ENCODE measurements at regions of chr17 and their contacts with region 1.

Region 1: DNA sequence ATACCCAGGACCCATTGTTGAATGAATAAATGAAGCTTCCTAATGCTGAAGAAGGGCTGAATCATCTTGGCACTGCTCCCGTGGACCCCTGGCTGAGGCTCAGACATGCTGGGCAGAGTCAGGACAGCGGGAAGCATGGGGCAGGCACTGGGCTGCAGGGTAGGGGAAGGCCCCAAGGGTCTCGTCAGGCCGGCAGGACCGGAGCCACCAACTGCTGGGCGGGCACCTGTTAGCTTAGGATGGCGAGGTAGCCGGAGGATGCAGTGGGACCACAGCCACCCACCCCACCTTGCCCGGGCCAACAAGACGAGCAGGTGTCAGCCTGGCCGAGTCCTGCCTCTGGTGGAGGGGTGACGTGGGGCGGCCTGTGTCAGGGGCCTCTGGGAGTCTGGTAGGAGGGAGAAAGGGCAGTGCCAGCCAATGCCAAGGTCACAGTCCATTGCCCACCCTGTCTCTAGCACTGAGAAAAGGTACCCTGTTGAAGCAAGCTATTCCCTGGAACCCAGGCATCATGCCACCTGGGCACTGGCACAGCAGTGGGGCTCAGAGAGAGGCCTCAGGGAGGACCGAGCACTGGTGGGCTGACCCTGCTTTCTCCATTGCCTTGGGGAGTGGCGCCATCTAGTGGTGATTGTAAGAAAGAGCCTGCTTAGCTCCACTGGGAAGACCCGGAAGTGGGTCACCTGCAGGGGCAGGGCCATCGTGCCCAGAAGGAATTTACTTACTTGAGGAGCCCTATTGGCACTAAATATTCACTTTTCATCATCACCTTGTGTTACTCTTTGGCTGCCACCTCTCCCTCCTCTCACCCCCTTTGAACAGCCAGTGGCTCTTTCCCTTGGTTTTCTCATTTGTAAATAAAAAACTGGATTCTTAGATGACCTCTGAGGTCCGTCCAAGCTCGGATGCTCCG is 3.0 kb upstream of the DLX3 start:
- DNase-seq: peak; percentile 10
- H3K4me3 ChIP-seq: no peak overlapping the region
- CTCF ChIP-seq: peak; percentile 85

Region 2: GRCh38 chr17:49567871-49568694 is 430.0 kb before region 1 on chr17:
- CTCF ChIA-PET with region 1: interaction called, 105 read pairs
- POLR2A ChIA-PET with region 1: no interaction called
- DNase-seq: no peak
- H3K4me3 ChIP-seq: peak overlapping the region; percentile 54
- CTCF ChIP-seq: peak; percentile 96

Region 3: GRCh38 chr17:49836111-49837030 is 161.7 kb before region 1 on chr17:
- CTCF ChIA-PET with region 1: interaction called, 37 read pairs
- POLR2A ChIA-PET with region 1: no interaction called
- DNase-seq: peak; percentile 23
- H3K4me3 ChIP-seq: no peak overlapping the region
- CTCF ChIP-seq: no peak

Region 4: GRCh38 chr17:49899191-49899485 is 98.9 kb before region 1 on chr17:
- CTCF ChIA-PET with region 1: interaction called, 32 read pairs
- POLR2A ChIA-PET with region 1: no interaction called
- DNase-seq: no peak
- H3K4me3 ChIP-seq: no peak overlapping the region
- CTCF ChIP-seq: no peak

Region 5: DNA sequence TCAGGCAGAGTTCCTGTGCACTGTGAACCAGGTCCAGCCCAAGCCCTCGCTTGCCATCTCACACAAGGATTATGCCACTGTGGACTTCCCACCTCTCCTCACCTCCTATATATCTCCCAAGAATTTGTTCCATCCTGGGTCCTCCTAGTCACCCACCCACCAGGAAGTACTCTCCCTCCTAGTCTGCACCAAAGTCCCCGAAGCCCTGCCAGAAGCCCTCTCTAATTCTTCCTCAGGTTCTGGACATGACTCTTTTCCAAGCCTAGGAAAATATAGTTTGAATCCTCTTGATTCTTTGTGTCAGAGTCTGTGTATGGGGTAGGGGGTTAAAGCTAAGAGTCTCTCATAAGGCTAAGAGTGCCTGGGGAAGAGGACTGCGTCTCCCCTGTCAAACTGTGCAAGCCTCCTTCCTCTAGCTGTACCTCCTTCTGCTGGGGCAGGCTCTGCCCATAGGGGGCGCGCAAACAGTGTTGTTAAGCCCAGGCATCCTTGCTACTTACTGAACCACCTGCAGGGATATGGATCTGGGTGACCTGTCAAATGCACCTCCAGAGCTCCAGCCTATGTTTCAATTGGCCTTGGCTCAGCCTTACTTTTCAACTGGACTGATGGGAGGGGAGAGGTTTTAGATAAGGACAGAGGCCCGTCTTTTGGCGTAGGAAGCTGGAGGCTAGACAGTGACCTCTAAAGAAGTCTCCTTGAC is 45.7 kb before region 1 on chr17:
- CTCF ChIA-PET with region 1: interaction called, 93 read pairs
- POLR2A ChIA-PET with region 1: no interaction called
- DNase-seq: no peak
- H3K4me3 ChIP-seq: no peak overlapping the region
- CTCF ChIP-seq: peak; percentile 86

Region 6: GRCh38 chr17:50015146-50015545 is 17.1 kb after region 1 on chr17:
- CTCF ChIA-PET with region 1: interaction called, 37 read pairs
- POLR2A ChIA-PET with region 1: no interaction called
- DNase-seq: no peak
- H3K4me3 ChIP-seq: no peak overlapping the region
- CTCF ChIP-seq: no peak

Region 7: DNA sequence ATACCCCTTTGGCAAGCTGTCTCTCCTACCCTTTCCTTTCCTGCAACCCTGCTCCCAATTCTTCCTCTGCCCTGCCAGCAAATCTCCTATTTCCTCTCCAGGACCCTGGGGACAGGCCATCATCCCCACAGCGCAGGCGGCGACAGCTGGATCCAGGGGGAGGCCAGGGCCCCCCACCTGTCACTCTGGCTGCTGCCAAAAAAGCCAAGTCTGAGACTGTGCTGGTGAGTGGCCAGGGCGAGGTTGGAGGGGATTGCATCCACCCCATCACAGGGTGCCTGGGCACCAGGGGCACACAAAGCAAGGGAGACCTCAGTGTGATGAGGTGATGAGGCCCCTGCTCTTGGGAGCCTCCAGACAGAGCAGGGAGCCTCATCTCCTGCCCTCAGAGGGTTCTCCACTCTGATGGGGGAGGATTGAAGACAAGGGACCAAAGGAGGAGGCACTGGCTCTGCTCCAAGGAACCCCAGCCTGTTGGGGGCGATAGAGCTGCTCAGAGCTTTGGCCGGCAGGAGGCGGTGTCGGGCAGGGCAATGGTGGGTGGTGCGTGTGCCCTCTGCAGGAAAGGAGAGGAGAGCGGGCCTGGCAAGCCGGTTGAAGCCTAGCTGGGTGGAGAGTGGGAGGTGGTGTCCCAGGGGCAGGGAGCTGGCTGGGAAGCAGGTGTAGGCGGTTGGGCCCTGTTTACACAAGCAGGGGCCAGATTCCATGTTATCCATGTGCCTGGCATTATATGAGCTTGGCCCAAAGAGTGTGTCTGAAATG is 81.5 kb after region 1 on chr17:
- CTCF ChIA-PET with region 1: interaction called, 14 read pairs
- POLR2A ChIA-PET with region 1: no interaction called
- DNase-seq: no peak
- H3K4me3 ChIP-seq: no peak overlapping the region
- CTCF ChIP-seq: peak; percentile 78

Region 8: GRCh38 chr17:50177983-50178834 is 180.2 kb after region 1 on chr17:
- CTCF ChIA-PET with region 1: no interaction called
- POLR2A ChIA-PET with region 1: no interaction called
- DNase-seq: no peak
- H3K4me3 ChIP-seq: no peak overlapping the region
- CTCF ChIP-seq: peak; percentile 71

Measured in AG04449 (cell line).